HEK293T (cell line): ENCODE measurements at regions of chr5 and their contacts with region 1.

Region 1: GRCh38 chr5:112160652-112161391 is 258.3 kb downstream of the EPB41L4A start:
- DNase-seq: peak; percentile 91

Region 2: DNA sequence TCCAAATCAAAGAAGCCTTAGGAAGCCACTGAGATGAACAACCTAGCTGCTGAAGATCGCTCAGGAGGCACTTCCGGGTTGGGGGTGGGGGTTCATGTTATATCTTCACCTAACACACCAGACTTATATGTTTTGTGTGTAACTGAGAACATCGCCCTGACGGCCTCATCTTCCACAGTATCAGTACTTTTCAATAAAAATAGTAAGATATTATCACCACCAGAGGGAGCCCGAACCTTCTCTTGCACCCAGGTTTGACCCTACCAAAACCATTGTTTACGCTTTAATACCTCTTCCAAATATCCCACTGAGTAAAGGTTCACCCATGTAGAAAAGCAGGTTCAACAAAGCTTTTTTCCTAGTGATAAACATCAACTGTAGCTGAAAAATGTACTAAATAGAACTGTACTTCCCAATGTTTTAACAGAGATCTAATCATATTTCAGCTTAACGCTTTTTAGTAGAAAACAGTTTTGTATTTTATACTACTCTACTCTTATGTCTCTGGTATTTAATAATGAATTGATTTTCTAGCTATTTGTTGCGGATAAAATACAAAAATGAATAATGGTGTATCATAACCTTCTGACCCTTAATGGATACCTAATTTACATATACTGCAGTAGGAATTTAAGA is 14.3 kb after region 1 on chr5:
- CTCF ChIA-PET with region 1: interaction called, 7 read pairs
- POLR2A ChIA-PET with region 1: interaction called, 10 read pairs
- DNase-seq: peak; percentile 55